ENCODE measurements at regions of chr6 and their contacts with region 1.

Region 1: DNA sequence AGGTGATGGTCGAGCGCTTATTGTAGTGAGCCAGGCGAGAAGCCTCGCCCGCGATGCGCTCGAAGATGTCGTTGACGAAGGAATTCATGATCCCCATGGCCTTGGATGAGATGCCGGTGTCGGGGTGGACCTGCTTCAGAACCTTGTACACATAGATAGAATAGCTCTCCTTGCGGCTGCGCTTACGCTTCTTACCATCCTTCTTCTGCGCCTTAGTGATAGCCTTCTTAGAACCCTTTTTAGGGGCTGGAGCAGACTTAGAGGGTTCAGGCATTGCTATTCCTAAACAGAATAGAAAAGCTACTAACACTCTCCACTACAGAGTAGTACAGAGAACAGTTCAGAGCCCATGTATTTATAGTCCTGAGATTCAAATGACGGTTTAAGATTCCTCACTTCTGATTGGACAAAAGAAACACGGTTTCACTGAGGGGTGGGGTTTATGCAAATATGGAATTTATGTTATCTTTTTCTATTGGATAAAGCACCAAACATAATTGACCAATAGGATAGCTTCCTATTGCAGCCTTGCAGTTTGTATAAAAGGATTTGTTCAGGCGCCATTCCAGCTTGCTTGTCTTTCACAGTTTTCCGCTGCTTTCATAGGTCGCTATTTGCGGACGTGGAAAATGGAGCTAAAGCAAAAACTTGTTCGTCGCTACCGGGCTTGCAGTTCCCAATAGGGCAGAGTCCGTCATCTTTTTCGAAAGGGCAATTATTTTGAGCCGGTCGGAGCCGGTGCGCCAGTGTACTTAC is 43.7 kb upstream of the HFE start:
- DNase-seq: peak in 1 of 2 donors; percentile 96
- H3K4me3 ChIP-seq: peak overlapping the region; percentile 44 to 61
- H3K27ac ChIP-seq: peak overlapping the region; percentile 87
- H3K4me1 ChIP-seq: peaks cover 6% of the 10 kb centered on the region
- H3K27me3 ChIP-seq: no peaks in the 10 kb centered on the region
- CTCF ChIP-seq: no peak
- POLR2A ChIP-seq: peak in 1 of 2 donors; percentile 98

Region 2: DNA sequence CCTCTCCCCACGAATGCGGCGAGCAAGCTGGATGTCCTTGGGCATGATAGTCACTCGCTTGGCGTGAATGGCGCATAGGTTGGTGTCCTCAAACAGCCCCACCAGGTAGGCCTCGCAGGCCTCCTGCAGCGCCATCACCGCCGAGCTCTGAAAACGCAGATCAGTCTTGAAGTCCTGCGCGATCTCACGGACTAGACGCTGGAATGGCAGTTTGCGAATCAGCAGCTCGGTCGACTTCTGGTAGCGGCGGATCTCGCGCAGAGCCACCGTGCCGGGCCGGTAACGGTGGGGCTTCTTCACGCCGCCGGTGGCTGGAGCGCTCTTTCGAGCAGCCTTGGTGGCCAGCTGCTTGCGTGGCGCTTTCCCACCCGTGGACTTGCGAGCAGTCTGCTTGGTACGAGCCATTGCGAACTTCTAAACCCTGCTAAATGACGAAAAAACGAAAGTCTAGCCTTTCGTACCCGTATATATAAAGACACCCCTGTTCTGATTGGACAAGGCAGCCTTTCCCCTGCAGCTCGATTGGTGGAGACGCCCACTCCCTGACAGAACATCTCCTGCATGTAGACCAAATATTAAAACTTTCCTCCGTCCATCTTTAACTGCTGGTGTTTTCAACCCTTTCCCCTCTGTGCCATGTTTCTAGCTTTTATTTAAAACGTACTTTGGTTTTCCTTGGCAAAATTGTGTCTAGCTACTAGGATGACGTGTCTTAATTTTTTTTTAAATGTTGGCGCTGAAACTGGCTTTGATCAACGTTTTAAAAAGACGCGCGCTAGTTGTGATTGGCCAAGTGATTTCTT is 153.5 kb after region 1 on chr6:
- intact Hi-C with region 1: loop called (anchors 5 kb)
- DNase-seq: no peak
- H3K4me3 ChIP-seq: peak overlapping the region; percentile 52 to 55
- H3K27ac ChIP-seq: peak overlapping the region; percentile 68
- H3K4me1 ChIP-seq: peaks cover 26% of the 10 kb centered on the region
- H3K27me3 ChIP-seq: no peaks in the 10 kb centered on the region
- CTCF ChIP-seq: no peak
- POLR2A ChIP-seq: peak in 1 of 2 donors; percentile 75

Measured in vagina (tissue), 2 donors.